Heart right ventricle (tissue), 16 donors: ENCODE measurements at regions of chr7 and their contacts with region 1.

Region 1: GRCh38 chr7:138125598-138126111 is 49.4 kb downstream of the AKR1D1 start:
- DNase-seq: no peak
- ATAC-seq: peak in 4 of 8 donors; percentile 39 to 49 (median 44)
- H3K4me3 ChIP-seq: no peak overlapping the region
- H3K27ac ChIP-seq: peak overlapping the region in 1 of 10 donors; percentile 16
- H3K4me1 ChIP-seq: peaks cover 0 to 7% (median 0%) of the 10 kb centered on the region in 9 donors
- H3K27me3 ChIP-seq: no peaks in the 10 kb centered on the region
- CTCF ChIP-seq: no peak

Region 2: GRCh38 chr7:137703291-137704010 is 422.2 kb before region 1 on chr7:
- intact Hi-C with region 1: no loop called
- DNase-seq: no peak
- ATAC-seq: no peak
- H3K4me3 ChIP-seq: no peak overlapping the region
- H3K27ac ChIP-seq: no peak overlapping the region
- H3K4me1 ChIP-seq: no peaks in the 10 kb centered on the region
- H3K27me3 ChIP-seq: no peaks in the 10 kb centered on the region
- CTCF ChIP-seq: no peak

Region 3: DNA sequence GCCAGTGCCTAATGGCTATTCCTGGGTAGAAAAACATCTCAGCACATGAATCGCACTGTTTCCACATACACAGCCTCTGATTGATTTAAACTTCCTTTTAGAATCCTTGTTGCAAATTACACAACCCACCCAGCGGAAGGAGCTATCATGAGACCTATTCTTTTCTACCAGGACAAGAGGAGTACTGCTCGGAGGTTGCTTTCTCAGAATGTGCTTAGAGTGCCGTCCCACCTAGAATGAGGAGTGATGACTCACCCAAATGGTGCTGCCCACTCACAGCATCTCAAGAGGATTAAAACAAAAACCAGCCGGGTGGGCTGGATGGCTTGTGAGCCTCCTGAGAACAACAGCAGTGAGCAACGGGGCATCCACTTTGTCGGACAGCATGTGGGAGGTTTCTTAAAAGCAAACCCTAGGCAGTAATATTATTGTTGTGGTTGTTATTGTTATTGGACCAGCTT is 407.8 kb before region 1 on chr7:
- intact Hi-C with region 1: loop called in 1 of 10 experiments (anchors 5 kb)
- DNase-seq: peak in 1 of 2 donors; percentile 8
- ATAC-seq: peak in 4 of 8 donors; percentile 41 to 87 (median 77)
- H3K4me3 ChIP-seq: no peak overlapping the region
- H3K27ac ChIP-seq: peak overlapping the region in 4 of 10 donors; percentile 16 to 63 (median 32)
- H3K4me1 ChIP-seq: peaks cover 0 to 20% (median 5%) of the 10 kb centered on the region in 9 donors
- H3K27me3 ChIP-seq: no peaks in the 10 kb centered on the region
- CTCF ChIP-seq: no peak